Esophagus muscularis mucosa (tissue), 4 donors: ENCODE measurements at regions of chr2 and their contacts with region 1.

Region 1: DNA sequence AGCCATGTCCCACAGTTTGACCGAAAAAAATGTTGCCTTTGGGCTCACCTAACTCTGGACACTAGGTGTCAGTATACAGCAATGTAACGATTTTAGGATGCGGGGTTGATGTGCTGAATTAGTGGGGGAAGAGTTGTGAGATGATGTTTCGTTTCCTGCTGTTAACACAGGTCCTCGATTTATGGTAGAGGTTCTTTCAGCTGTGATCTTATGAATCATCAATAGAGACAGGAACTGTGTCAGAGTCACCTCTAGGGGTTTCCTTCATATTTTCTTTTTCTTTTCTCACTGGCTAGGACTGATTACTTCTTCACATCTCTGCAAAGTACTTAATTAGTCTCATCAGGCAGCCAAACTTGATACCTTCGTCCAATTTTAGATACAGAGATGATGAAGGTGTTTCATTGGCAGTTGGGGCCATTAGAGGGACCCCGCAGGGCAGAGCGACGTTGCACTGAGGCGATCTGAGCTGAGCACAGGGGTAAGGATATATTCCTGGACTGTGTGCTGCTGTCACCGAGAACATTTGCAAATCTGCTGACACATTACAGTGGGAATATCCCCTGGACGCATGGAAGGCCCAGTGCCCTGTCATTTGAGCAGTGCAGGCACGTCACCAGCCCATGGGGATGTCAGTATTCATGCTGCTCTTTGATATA is 10.2 kb upstream of the MMADHC start:
- DNase-seq: no peak
- H3K4me3 ChIP-seq: peak overlapping the region; percentile 19 to 41 (median 36)
- H3K27ac ChIP-seq: no peak overlapping the region
- H3K4me1 ChIP-seq: peaks cover 5 to 11% (median 9%) of the 10 kb centered on the region in 4 donors
- H3K27me3 ChIP-seq: no peaks in the 10 kb centered on the region
- CTCF ChIP-seq: peak; percentile 79 to 88 (median 82)
- EP300 ChIP-seq: no peak
- POLR2A ChIP-seq: no peak

Region 2: DNA sequence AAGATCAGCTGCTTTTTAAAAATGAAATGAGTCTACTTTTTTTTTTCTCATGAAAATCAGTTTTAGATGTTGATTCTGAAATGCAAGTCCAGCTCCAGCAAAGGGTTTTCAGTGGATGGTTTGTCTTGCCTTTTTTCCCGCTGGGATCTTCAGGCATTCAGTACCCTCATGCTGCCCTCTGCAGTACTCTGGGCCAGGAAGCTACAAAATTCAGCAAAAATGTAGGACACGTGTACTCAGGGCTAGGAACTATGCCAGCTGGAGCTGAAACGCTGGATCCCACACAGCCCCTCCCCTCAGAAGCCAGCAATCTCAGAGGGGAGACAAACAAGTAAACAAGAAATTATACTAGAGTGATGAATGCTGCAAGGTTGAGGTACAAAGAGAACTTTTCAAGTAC is 107.5 kb before region 1 on chr2:
- intact Hi-C with region 1: no loop called
- DNase-seq: no peak
- H3K4me3 ChIP-seq: no peak overlapping the region
- H3K27ac ChIP-seq: no peak overlapping the region
- H3K4me1 ChIP-seq: no peaks in the 10 kb centered on the region
- H3K27me3 ChIP-seq: no peaks in the 10 kb centered on the region
- CTCF ChIP-seq: no peak
- EP300 ChIP-seq: no peak
- POLR2A ChIP-seq: no peak

Region 3: DNA sequence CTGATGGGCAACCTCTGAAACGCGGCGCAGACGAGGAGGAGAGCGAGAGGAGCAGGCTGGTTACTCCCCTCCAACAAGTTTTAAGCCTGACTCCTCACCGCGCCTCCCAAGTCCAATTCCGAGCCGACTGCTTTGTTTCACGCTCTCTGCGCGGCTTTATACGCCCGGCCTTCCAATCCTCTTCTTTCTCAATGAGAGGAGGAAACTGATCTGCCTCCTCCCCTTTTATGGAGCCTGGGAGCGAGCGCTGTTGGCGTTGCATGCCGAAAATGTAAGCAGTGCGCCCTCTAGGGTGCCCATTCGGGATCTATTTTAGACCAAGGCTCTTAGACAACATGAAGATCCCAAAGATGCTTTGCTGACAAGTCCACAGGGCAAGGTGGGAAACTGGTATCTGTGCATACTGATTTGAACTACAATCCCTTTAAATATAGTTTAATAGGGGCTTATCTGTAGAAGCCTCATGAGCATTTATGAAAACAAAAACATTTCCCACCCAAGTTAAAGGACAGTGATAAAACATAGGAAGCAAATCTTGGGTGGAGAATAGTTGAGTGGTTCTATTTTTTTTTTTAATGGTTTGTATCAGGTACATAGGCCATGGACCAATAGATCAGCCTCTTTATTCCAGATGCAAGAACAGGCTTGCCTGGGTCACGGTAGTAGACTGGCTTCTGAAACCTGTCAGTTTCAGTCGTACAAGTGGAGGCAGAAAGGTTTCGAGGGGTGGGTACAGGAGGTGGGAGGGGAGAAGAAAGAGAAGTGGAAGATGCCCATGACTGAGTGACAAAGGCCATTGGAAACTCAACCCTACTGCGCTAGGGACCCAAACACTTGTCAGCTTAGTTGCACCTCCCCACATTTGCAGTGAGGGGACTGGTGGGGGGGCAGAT is 890.0 kb after region 1 on chr2 and contains the start of gene RND3:
- intact Hi-C with region 1: loop called (anchors 5 kb)
- DNase-seq: peak; percentile 99
- H3K4me3 ChIP-seq: peak within 1 kb of the TSS; percentile 79 to 88 (median 85)
- H3K27ac ChIP-seq: peak within 1 kb of the TSS; percentile 95 to 98 (median 96)
- H3K4me1 ChIP-seq: peaks cover 20 to 22% (median 21%) of the 10 kb centered on the region in 4 donors
- H3K27me3 ChIP-seq: no peaks in the 10 kb centered on the region
- CTCF ChIP-seq: peak; percentile 85 to 91 (median 86)
- EP300 ChIP-seq: no peak
- POLR2A ChIP-seq: peak; percentile 96
- total RNA-seq, gene RND3: 39.6 to 219 (median 73.5) TPM

Region 4: GRCh38 chr2:150610671-150611279 is 1013.0 kb after region 1 on chr2:
- intact Hi-C with region 1: loop called (anchors 5 kb)
- DNase-seq: no peak
- H3K4me3 ChIP-seq: no peak overlapping the region
- H3K27ac ChIP-seq: peak overlapping the region in 1 of 4 donors; percentile 12
- H3K4me1 ChIP-seq: peaks cover 6 to 36% (median 30%) of the 10 kb centered on the region in 4 donors
- H3K27me3 ChIP-seq: no peaks in the 10 kb centered on the region
- CTCF ChIP-seq: peak; percentile 44 to 60 (median 47)
- EP300 ChIP-seq: no peak
- POLR2A ChIP-seq: no peak

Region 5: GRCh38 chr2:151051574-151052220 is 1453.9 kb after region 1 on chr2:
- intact Hi-C with region 1: loop called (anchors 5 kb)
- DNase-seq: no peak
- H3K4me3 ChIP-seq: no peak overlapping the region
- H3K27ac ChIP-seq: no peak overlapping the region
- H3K4me1 ChIP-seq: peaks cover 0 to 14% (median 0%) of the 10 kb centered on the region in 4 donors
- H3K27me3 ChIP-seq: no peaks in the 10 kb centered on the region
- CTCF ChIP-seq: peak; percentile 70 to 88 (median 80)
- EP300 ChIP-seq: no peak
- POLR2A ChIP-seq: no peak

Region 6: GRCh38 chr2:151241224-151241623 is 1643.4 kb after region 1 on chr2:
- intact Hi-C with region 1: loop called (anchors 2 kb)
- DNase-seq: no peak
- H3K4me3 ChIP-seq: no peak overlapping the region
- H3K27ac ChIP-seq: no peak overlapping the region
- H3K4me1 ChIP-seq: no peaks in the 10 kb centered on the region
- H3K27me3 ChIP-seq: no peaks in the 10 kb centered on the region
- CTCF ChIP-seq: no peak
- EP300 ChIP-seq: no peak
- POLR2A ChIP-seq: no peak